CD8-positive, alpha-beta T cell (primary cell): ENCODE measurements at regions of chr12 and their contacts with region 1.

Region 1: GRCh38 chr12:90562671-90563070 is 392.3 kb downstream of the CCER1 start:
- DNase-seq: no peak
- ATAC-seq: no peak
- H3K4me3 ChIP-seq: no peak overlapping the region
- H3K4me3 Mint-ChIP-seq: no peak overlapping the region
- H3K27ac ChIP-seq: no peak overlapping the region
- H3K27ac Mint-ChIP-seq: no peak overlapping the region
- H3K4me1 ChIP-seq: no peaks in the 10 kb centered on the region
- H3K4me1 Mint-ChIP-seq: no peaks in the 10 kb centered on the region
- H3K27me3 ChIP-seq: no peaks in the 10 kb centered on the region
- H3K27me3 Mint-ChIP-seq: peaks cover 6% of the 10 kb centered on the region
- CTCF ChIP-seq: no peak

Region 2: GRCh38 chr12:90575995-90576394 is 13.3 kb after region 1 on chr12:
- CTCF ChIA-PET with region 1: no interaction called
- POLR2A ChIA-PET with region 1: no interaction called
- intact Hi-C with region 1: loop called in 1 of 2 experiments (anchors 2 kb)
- DNase-seq: no peak
- ATAC-seq: no peak
- H3K4me3 ChIP-seq: no peak overlapping the region
- H3K4me3 Mint-ChIP-seq: no peak overlapping the region
- H3K27ac ChIP-seq: no peak overlapping the region
- H3K27ac Mint-ChIP-seq: no peak overlapping the region
- H3K4me1 ChIP-seq: no peaks in the 10 kb centered on the region
- H3K4me1 Mint-ChIP-seq: no peaks in the 10 kb centered on the region
- H3K27me3 ChIP-seq: no peaks in the 10 kb centered on the region
- H3K27me3 Mint-ChIP-seq: no peaks in the 10 kb centered on the region
- CTCF ChIP-seq: no peak

Region 3: GRCh38 chr12:90627180-90627896 is 64.7 kb after region 1 on chr12:
- CTCF ChIA-PET with region 1: no interaction called
- POLR2A ChIA-PET with region 1: no interaction called
- intact Hi-C with region 1: no loop called
- DNase-seq: no peak
- ATAC-seq: no peak
- H3K4me3 ChIP-seq: no peak overlapping the region
- H3K4me3 Mint-ChIP-seq: no peak overlapping the region
- H3K27ac ChIP-seq: no peak overlapping the region
- H3K27ac Mint-ChIP-seq: no peak overlapping the region
- H3K4me1 ChIP-seq: no peaks in the 10 kb centered on the region
- H3K4me1 Mint-ChIP-seq: no peaks in the 10 kb centered on the region
- H3K27me3 ChIP-seq: no peaks in the 10 kb centered on the region
- H3K27me3 Mint-ChIP-seq: no peaks in the 10 kb centered on the region
- CTCF ChIP-seq: no peak